ENCODE measurements at regions of chr14 and their contacts with region 1.

Region 1: GRCh38 chr14:91980127-91980741 is 32.7 kb upstream of the FBLN5 start:
- DNase-seq: peak; percentile 22
- ATAC-seq: peak; percentile 98
- H3K4me3 Mint-ChIP-seq: no peak overlapping the region
- H3K27ac Mint-ChIP-seq: peak overlapping the region; percentile 43
- H3K4me1 Mint-ChIP-seq: peaks cover 41% of the 10 kb centered on the region
- H3K27me3 Mint-ChIP-seq: no peaks in the 10 kb centered on the region

Region 2: GRCh38 chr14:91961297-91962220 is 18.7 kb before region 1 on chr14:
- CTCF ChIA-PET with region 1: interaction called, 4 read pairs
- POLR2A ChIA-PET with region 1: interaction called, 4 read pairs
- intact Hi-C with region 1: loop called (anchors 1 kb)
- DNase-seq: no peak
- ATAC-seq: peak; percentile 87
- H3K4me3 Mint-ChIP-seq: peak overlapping the region; percentile 8
- H3K27ac Mint-ChIP-seq: peak overlapping the region; percentile 77
- H3K4me1 Mint-ChIP-seq: peaks cover 29% of the 10 kb centered on the region
- H3K27me3 Mint-ChIP-seq: peaks cover 6% of the 10 kb centered on the region

Region 3: DNA sequence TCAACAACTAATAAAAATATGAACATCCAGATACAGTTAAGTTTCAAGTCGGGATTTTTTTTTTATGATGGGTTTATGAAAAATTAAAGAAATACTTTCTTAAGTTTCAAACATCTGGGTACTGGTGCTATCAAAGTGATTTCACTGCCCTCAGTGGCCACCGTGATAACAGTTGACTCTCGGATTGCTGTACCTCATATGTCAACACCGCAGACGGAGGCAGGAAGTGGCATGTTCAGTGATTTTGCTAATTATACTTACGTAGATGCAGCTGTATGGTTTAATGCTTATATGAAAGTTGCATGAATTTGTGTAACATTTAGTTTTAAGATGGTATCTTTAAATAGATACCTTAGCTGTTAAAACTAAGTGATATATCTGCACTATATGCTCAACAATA is 12.0 kb before region 1 on chr14:
- CTCF ChIA-PET with region 1: interaction called, 4 read pairs
- POLR2A ChIA-PET with region 1: interaction called, 4 read pairs
- intact Hi-C with region 1: loop called (anchors 1 to 2 kb)
- DNase-seq: peak; percentile 68
- ATAC-seq: peak; percentile 77
- H3K4me3 Mint-ChIP-seq: no peak overlapping the region
- H3K27ac Mint-ChIP-seq: peak overlapping the region; percentile 62
- H3K4me1 Mint-ChIP-seq: peaks cover 29% of the 10 kb centered on the region
- H3K27me3 Mint-ChIP-seq: no peaks in the 10 kb centered on the region

Measured in activated CD4-positive, alpha-beta T cell treated with anti-CD3 and anti-CD28 coated beads for 36 hours (primary cell).